CD4-positive, alpha-beta T cell (primary cell): ENCODE measurements at regions of chr16 and their contacts with region 1.

Region 1: GRCh38 chr16:70454222-70455034 is at the start of gene FCSK:
- DNase-seq: peak; percentile 50 to 85 (median 59)
- ATAC-seq: peak; percentile 91
- H3K4me3 ChIP-seq: peak within 1 kb of the TSS; percentile 93
- H3K4me3 Mint-ChIP-seq: peak within 1 kb of the TSS; percentile 90
- H3K27ac ChIP-seq: peak within 1 kb of the TSS; percentile 89 to 95
- H3K27ac Mint-ChIP-seq: peak within 1 kb of the TSS; percentile 61
- H3K4me1 ChIP-seq: peaks cover 21% of the 10 kb centered on the region
- H3K4me1 Mint-ChIP-seq: peaks cover 23% of the 10 kb centered on the region
- H3K27me3 ChIP-seq: no peaks in the 10 kb centered on the region
- H3K27me3 Mint-ChIP-seq: no peaks in the 10 kb centered on the region
- CTCF ChIP-seq: no peak
- total RNA-seq, gene FCSK: 21.8 to 25.4 TPM

Region 2: DNA sequence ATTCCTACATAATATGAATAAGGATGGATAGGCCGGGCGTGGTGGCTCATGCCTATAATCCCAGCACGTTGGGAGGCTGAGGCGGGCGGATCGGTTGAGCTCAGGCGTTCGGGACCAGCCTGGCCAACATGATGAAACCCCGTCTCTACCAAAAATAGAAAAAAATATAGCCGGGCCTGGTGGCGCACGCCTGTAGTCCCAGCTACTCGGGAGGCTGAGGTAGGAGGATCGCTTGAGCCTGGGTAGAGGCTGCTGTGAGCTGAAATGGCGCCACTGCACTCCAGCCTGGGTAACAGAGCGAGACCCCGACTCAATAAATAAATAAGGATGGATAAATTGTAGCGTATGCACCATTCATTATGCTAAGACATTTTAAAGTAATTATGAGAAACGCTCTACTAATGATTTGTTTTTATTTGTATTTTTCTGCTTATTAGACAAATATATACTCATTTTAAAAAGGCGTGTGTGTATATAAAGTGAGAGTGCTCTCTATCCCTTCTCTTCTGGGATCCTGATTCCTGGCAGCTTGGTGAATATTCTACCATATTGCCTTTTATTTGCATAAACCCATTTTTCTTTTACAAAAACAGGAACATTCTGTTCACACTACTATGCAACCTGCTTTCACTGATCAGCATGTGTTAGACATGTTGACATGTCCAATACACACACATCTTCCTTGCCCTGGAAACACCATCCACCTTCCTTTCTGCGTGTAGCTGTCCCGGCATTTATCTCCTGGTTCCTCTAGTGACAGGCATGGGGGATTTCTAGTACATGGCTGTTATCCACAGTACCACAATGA is 81.3 kb before region 1 on chr16:
- CTCF ChIA-PET with region 1: interaction called, 4 read pairs
- POLR2A ChIA-PET with region 1: interaction called, 11 read pairs
- intact Hi-C with region 1: no loop called
- DNase-seq: no peak
- ATAC-seq: no peak
- H3K4me3 ChIP-seq: no peak overlapping the region
- H3K4me3 Mint-ChIP-seq: no peak overlapping the region
- H3K27ac ChIP-seq: no peak overlapping the region
- H3K27ac Mint-ChIP-seq: no peak overlapping the region
- H3K4me1 ChIP-seq: peaks cover 8% of the 10 kb centered on the region
- H3K4me1 Mint-ChIP-seq: peaks cover 11% of the 10 kb centered on the region
- H3K27me3 ChIP-seq: no peaks in the 10 kb centered on the region
- H3K27me3 Mint-ChIP-seq: no peaks in the 10 kb centered on the region
- CTCF ChIP-seq: no peak

Region 3: DNA sequence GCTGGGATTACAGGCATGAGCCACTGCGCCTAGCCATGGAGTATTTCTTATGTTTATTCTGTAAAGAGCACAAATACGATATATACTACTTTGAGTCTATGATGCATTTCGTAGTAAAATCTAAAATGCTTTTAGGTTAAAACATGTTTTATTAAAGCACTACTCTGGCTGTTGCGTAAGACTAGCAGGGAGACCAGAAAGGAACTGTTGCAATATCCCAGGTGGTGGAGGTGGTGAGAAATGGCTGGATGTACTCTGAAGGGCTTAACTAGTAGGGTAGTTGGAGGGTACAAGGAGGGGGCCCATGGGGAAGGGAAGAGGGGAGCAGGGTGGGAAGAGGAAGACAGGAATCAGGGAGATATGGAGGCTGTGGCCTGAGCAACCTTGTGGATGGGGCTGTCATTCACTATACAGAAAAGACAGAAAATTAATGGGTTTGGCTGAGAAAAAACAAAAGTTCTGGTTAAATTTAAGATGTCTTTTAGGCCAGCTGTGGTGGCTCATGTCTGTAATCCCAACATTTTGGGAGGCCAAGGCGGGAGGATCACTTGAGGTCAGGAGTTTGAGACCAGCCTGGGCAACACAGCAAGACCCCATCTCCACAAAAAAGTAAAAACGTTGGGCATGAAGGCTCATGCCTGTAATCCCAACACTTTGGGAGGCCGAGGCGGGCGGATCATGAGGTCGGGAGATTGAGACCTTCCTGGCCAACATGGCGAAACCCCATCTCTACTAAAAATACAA is 51.3 kb before region 1 on chr16:
- CTCF ChIA-PET with region 1: interaction called, 3 read pairs
- POLR2A ChIA-PET with region 1: interaction called, 4 read pairs
- intact Hi-C with region 1: loop called in 1 of 2 experiments (anchors 2 kb)
- DNase-seq: no peak
- ATAC-seq: no peak
- H3K4me3 ChIP-seq: no peak overlapping the region
- H3K4me3 Mint-ChIP-seq: peak overlapping the region; percentile 55
- H3K27ac ChIP-seq: no peak overlapping the region
- H3K27ac Mint-ChIP-seq: peak overlapping the region; percentile 75
- H3K4me1 ChIP-seq: peaks cover 50% of the 10 kb centered on the region
- H3K4me1 Mint-ChIP-seq: peaks cover 57% of the 10 kb centered on the region
- H3K27me3 ChIP-seq: no peaks in the 10 kb centered on the region
- H3K27me3 Mint-ChIP-seq: no peaks in the 10 kb centered on the region
- CTCF ChIP-seq: no peak